ENCODE measurements at regions of chrX and their contacts with region 1.

Region 1: GRCh38 chrX:130190801-130191200 is 19.0 kb downstream of the RAB33A start:
- H3K4me3 Mint-ChIP-seq: no peak overlapping the region
- H3K27ac Mint-ChIP-seq: no peak overlapping the region
- H3K4me1 Mint-ChIP-seq: peaks cover 9% of the 10 kb centered on the region
- H3K27me3 Mint-ChIP-seq: no peaks in the 10 kb centered on the region

Region 2: DNA sequence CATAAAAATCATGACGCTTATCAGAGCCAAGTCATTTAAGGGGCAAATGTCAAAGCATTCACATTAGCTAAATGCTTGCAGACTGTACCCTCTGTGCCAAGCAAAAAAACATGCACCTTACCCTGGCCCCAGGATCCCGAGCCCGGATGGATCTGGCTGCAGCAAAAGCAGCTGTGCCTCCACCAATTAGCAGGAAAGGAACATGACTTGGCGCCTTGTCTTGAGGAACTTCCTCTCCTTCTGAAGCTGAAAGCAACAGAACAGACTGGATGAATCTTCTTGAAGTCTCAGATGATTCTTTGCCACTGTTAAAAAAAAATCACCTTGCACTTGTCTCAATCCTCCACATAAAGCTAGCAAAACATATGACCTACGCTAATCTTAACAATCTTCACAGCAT is 43.2 kb before region 1 on chrX:
- intact Hi-C with region 1: loop called (anchors 5 kb)
- H3K4me3 Mint-ChIP-seq: peak overlapping the region; percentile 61
- H3K27ac Mint-ChIP-seq: peak overlapping the region; percentile 74
- H3K4me1 Mint-ChIP-seq: peaks cover 14% of the 10 kb centered on the region
- H3K27me3 Mint-ChIP-seq: no peaks in the 10 kb centered on the region

Region 3: GRCh38 chrX:130378008-130378669 is 187.3 kb after region 1 on chrX:
- intact Hi-C with region 1: no loop called
- H3K4me3 Mint-ChIP-seq: no peak overlapping the region
- H3K27ac Mint-ChIP-seq: no peak overlapping the region
- H3K4me1 Mint-ChIP-seq: no peaks in the 10 kb centered on the region
- H3K27me3 Mint-ChIP-seq: peaks cover 3% of the 10 kb centered on the region

Measured in dendritic cell treated with granulocyte-macrophage colony-stimulating factor and Interleukin-4, amounts not matched to agents 40 ng/mL and 50 ng/mL, for 4 days (primary cell).